ENCODE measurements at regions of chr7 and their contacts with region 1.

Region 1: DNA sequence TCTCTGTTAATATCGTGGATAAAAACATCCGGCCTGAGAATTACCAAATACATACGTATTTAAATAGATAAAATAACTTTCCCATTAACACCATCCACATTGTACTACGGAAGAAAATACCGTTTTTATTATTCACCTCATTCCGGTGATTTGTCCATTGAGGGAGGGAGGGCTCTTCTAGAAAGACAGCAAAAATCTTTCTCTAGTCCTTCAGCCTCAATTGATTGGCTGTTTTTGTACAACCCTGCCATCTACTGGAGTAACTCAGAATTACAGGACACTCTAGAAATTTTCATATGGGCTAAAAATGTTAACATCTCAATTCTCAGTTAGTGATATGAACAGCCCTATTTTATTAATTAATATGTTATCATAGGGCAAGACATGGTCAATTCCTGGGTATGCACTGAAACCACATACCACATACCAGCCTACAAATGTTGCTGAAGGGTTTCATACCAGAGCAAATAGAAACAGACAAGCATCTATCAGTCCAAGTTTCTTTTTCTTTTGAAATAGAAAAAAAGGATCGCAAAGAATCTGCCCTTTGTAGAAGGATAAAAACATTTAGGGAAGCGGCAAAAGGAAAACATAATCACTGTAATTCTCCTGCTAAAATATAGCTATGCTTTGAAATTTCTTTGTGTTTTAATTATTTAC is 55.8 kb upstream of the CDCA7L start:
- DNase-seq: peak; percentile 66
- H3K4me3 ChIP-seq: no peak overlapping the region; a peak in 1 of 4 replicates
- H3K27ac ChIP-seq: no peak overlapping the region
- H3K4me1 ChIP-seq: no peaks in the 10 kb centered on the region
- H3K27me3 ChIP-seq: peaks cover 24% of the 10 kb centered on the region
- CTCF ChIP-seq: peak; percentile 97
- EP300 ChIP-seq: no peak
- RAD21 ChIP-seq: peak; percentile 92

Region 2: DNA sequence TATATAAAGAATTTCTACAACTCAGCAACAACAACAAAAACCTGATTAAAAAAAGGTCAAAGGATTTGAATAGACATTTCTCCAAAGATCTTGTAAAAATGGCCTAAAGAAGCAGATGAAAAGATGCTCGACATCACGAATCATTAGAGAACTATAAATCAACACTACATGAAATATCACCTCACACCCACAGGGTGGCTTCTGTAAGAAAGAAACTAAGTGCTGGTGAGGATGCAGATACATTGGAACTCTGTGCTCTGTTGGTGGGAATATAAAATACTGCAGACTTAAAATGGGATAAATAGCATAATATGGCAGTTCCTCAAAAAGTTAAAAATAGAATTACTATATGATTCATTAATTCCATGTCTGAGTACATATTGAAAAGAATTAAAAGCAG is 17.4 kb before region 1 on chr7:
- CTCF ChIA-PET with region 1: interaction called, 11 read pairs
- POLR2A ChIA-PET with region 1: no interaction called
- DNase-seq: no peak
- H3K4me3 ChIP-seq: no peak overlapping the region
- H3K27ac ChIP-seq: no peak overlapping the region
- H3K4me1 ChIP-seq: no peaks in the 10 kb centered on the region
- H3K27me3 ChIP-seq: peaks cover 30% of the 10 kb centered on the region; the same call in 1 of the 2 replicates
- CTCF ChIP-seq: peak; percentile 10; the same call in 1 of the 2 replicates
- EP300 ChIP-seq: no peak
- RAD21 ChIP-seq: no peak

Region 3: DNA sequence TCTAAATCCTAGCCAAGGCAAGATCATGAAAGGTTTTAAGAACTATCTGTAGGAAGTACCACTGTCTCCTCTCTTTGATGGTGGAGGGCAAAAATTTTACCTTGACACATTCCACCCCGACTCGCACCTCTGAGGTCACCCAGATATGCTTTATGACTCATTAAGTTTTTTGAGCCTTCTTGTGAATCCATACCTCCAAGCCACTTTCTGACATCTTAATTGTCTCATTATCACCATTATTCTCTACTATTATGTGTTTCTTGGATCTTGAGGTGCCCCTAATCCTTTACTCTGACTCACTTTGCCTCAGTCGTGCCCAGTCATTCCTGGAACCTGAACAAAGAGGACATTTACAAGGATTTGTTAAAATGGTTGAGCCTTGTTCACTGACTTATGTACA is 208.9 kb after region 1 on chr7:
- CTCF ChIA-PET with region 1: no interaction called
- POLR2A ChIA-PET with region 1: no interaction called
- DNase-seq: no peak
- H3K4me3 ChIP-seq: no peak overlapping the region
- H3K27ac ChIP-seq: no peak overlapping the region
- H3K4me1 ChIP-seq: peaks cover 0 to 17% of the 10 kb centered on the region in 2 experiments; a peak in 2 of 4 replicates
- H3K27me3 ChIP-seq: no peaks in the 10 kb centered on the region
- CTCF ChIP-seq: no peak
- EP300 ChIP-seq: no peak
- RAD21 ChIP-seq: no peak